Activated CD8-positive, alpha-beta memory T cell treated with anti-CD3 and anti-CD28 coated beads, Interleukin-2, amount 10 ng/mL, durations not matched to agents 7 days and 5 days (primary cell): ENCODE measurements at regions of chr7 and their contacts with region 1.

Region 1: GRCh38 chr7:97858221-97858620 is 14.0 kb downstream of the ASNS start:
- DNase-seq: no peak
- ATAC-seq: no peak
- H3K4me3 Mint-ChIP-seq: no peak overlapping the region
- H3K27ac Mint-ChIP-seq: no peak overlapping the region
- H3K4me1 Mint-ChIP-seq: peaks cover 7% of the 10 kb centered on the region
- H3K27me3 Mint-ChIP-seq: no peaks in the 10 kb centered on the region

Region 2: GRCh38 chr7:97845622-97846203 is 12.5 kb before region 1 on chr7:
- CTCF ChIA-PET with region 1: interaction called, 12 read pairs
- DNase-seq: no peak
- ATAC-seq: no peak
- H3K4me3 Mint-ChIP-seq: no peak overlapping the region
- H3K27ac Mint-ChIP-seq: no peak overlapping the region
- H3K4me1 Mint-ChIP-seq: no peaks in the 10 kb centered on the region
- H3K27me3 Mint-ChIP-seq: no peaks in the 10 kb centered on the region

Region 3: DNA sequence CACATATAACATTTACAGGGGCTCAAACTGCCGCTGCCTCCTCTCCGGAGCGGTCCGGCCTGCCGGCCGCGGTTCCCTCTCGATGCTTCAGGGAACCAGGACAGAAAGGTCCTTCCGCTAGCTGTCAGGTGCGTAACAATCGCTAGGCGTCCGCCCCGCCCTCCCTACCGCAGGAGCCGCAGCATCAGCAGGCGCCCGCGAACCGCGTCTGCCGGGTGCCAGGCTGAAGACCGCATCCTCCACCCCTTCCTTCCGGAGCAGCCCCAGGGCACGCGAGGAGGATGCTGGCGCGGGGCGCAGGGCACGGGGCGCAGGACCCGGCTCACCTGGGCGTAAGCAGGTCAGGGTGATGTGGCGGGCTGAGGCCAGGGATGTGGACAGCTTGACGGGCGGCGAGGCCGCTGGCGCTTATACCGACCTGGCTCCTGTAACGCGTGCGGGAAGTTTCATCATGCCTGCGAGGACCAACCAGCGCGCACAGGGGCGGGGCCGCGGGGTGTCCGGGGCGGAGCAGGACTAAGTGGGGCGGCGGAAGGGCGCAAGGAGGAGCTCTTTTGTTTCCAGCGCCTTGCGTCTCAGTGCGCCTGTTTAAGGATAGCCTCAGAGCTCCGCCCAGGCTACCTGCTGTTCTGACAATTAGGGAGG is 13.9 kb after region 1 on chr7 and contains the start of gene ASNS:
- CTCF ChIA-PET with region 1: no interaction called
- DNase-seq: peak; percentile 95
- ATAC-seq: peak; percentile 96
- H3K4me3 Mint-ChIP-seq: peak within 1 kb of the TSS; percentile 86
- H3K27ac Mint-ChIP-seq: peak within 1 kb of the TSS; percentile 88
- H3K4me1 Mint-ChIP-seq: peaks cover 22% of the 10 kb centered on the region
- H3K27me3 Mint-ChIP-seq: no peaks in the 10 kb centered on the region
- total RNA-seq, gene ASNS: 60.1 to 92.5 TPM